ENCODE measurements at regions of chr10 and their contacts with region 1.

Region 1: GRCh38 chr10:70355051-70356021 is 27.1 kb downstream of the LRRC20 start:
- DNase-seq: peak; percentile 52
- CTCF ChIP-seq: no peak

Region 2: GRCh38 chr10:70227548-70228320 is 127.6 kb before region 1 on chr10:
- in situ Hi-C with region 1: loop called (anchors 5 kb)
- DNase-seq: no peak
- CTCF ChIP-seq: no peak

Region 3: GRCh38 chr10:70634011-70634410 is 278.7 kb after region 1 on chr10:
- in situ Hi-C with region 1: no loop called
- DNase-seq: no peak
- CTCF ChIP-seq: no peak

Region 4: GRCh38 chr10:70668454-70668970 is 313.2 kb after region 1 on chr10:
- in situ Hi-C with region 1: no loop called
- DNase-seq: no peak
- CTCF ChIP-seq: no peak

Region 5: DNA sequence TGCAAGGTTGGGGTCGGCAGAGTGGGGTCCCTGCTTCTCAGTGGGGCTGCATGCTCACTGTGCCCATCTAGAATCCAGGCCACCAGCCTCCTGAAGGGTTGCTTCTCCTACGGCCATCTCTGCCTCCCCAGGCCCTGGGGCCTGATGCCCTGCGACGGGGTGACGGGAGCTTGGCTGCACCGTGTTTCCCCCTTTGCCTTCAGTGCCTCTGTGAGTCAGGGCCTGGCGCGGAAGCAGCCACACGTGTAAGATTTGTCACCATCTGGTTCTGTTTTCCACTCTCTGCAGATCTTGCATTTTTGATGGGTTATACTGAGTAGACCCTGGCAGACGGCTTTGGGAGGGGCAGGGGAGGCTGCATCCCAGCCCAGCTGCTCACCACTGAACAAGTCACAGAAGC is 324.2 kb after region 1 on chr10:
- in situ Hi-C with region 1: no loop called
- DNase-seq: no peak
- CTCF ChIP-seq: no peak

Measured in GM13977 (cell line).